ENCODE measurements at regions of chr20 and their contacts with region 1.

Region 1: DNA sequence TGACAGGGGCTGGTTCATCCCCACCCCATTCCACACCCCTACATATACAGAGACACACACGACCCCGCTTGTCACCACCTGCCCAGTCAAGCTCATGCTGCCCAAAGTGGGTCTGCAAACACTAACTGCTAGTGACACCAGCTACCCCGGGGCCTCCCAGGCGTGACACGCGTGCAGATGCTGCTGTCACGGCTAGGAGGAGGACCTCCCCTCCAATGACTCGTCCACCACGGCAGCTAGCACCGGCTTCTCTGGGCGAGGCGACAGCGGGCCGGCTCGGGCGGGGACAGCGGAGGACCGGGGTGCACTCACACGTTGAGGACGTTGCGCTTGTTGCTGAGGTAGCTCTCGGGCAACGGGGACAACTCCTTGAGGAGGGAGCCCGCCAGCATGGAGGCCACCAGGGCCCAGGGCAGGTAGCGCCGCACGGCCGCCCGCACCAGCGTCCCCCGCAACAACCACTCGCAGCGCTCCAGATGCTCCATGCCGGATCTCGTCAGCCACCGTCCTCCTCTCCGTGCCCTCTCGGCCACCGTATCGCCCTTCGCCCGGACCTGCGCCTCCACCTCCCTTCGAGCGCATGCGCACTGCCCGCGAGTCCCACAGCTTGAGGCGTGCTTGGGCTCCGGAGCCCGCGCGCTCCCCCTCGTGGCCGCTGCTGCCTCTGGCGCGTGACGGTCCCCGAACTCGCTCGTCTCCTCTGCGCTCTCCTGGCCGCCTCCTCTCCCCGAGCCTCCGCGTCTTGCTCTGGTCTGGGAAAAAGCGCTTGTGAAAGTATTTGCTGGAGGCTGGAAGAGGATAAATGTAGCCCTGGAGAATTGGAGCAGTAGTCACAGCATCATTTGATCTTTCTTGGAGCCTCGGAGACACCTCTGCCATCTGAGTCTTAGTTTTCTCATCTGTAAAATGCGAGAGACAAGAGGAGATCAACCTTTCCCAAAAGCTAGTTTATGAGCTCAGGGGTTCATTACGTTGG is at the start of gene FITM2:
- DNase-seq: peak; percentile 99 to 100
- ATAC-seq: peak; percentile 99
- H3K4me3 ChIP-seq: peak within 1 kb of the TSS; percentile 31 to 77
- H3K27ac ChIP-seq: no peak within 1 kb of the TSS
- H3K4me1 ChIP-seq: no peaks in the 10 kb centered on the region
- H3K27me3 ChIP-seq: no peaks in the 10 kb centered on the region
- total RNA-seq, gene FITM2: 6.6 TPM

Region 2: DNA sequence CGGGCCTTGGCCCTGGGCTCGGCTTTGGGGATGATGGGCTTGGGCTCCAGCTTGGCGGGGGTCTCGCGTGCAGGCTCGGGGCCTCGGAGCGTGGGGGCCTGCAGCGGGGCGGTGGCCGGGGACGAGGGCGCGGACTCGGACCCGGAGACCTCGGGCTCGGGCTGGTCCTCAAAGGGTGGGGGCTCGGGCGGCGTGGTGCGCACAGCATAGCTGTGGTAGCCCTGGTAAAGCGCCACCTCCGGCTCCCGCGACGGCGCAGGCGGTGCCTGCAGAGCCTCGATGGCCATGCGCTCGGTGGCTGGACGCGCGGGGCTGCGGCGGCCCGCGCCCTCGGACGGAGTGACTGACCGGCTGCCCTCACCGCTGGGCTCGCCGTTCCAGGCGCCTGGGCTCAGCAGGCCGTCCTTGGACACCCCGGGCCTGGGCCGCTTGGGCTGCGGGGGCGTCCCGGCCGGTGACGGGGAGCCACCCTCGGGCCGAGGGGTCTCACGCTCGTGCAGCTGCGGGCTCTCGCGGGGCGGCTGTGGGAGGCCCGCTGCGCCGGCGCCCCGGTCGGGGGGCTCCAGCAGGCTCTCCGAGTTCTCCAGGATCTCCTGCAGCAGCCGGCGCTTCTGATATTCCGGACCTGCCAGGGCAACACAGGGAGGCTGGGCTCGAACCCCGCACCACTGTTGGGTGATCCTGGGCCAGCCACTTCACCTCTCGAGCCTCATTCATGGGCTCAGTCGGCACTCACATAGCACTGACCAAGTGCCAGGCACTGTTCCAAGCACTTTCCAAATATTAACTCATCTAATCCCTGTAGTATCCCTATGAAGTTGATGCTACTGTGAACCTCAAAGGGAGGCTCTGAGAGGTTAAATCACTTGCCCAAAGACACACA is 194.9 kb before region 1 on chr20:
- intact Hi-C with region 1: loop called in 1 of 2 experiments (anchors 2 kb)
- DNase-seq: no peak
- ATAC-seq: no peak
- H3K4me3 ChIP-seq: no peak overlapping the region
- H3K27ac ChIP-seq: no peak overlapping the region
- H3K4me1 ChIP-seq: peaks cover 0 to under 1% of the 10 kb centered on the region in 2 donors
- H3K27me3 ChIP-seq: no peaks in the 10 kb centered on the region

Region 3: DNA sequence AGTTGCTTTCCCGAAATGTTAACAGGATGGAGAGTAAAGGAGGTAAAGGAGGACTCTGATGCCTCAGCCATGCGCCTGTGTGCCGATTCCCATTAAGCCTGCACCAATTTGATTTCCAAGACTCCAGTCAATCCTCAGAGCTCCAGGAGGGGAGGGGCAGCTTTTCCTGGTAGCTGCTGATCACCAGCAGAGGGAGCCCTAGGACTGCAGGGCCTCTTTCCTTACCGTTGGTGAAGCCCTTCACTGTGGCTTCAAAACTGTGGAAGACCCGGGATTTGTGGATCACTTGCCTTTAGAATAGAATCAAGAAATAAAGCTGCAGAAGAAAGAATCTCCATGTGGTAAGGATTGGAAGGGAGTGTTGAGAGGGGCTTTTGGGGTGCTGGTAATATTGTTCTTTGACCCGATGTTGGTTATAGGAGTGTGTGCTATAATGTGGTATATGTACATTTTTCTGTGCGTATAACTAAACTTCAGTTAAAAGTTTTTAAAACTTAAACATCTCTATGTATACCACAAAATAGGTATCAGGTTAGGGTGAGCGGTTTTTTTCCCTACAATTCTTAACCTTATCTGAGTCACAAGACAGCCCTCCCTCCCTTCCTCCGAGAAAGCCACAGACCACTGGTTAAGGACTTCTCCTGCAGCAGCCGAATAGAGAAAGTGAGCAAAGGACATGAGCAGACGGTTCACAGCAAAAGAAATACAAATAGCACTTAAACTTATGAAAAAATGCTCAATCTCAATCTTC is 93.4 kb before region 1 on chr20:
- intact Hi-C with region 1: loop called (anchors 1 to 2 kb)
- DNase-seq: peak in 1 of 2 donors; percentile 72
- ATAC-seq: no peak
- H3K4me3 ChIP-seq: no peak overlapping the region
- H3K27ac ChIP-seq: no peak overlapping the region
- H3K4me1 ChIP-seq: no peaks in the 10 kb centered on the region
- H3K27me3 ChIP-seq: no peaks in the 10 kb centered on the region

Region 4: GRCh38 chr20:44247586-44248409 is 63.2 kb before region 1 on chr20:
- intact Hi-C with region 1: no loop called
- DNase-seq: no peak
- ATAC-seq: peak; percentile 69
- H3K4me3 ChIP-seq: peak overlapping the region in 1 of 2 donors; percentile 22
- H3K27ac ChIP-seq: no peak overlapping the region
- H3K4me1 ChIP-seq: no peaks in the 10 kb centered on the region
- H3K27me3 ChIP-seq: no peaks in the 10 kb centered on the region

Measured in aorta (tissue), 5 donors.